ENCODE measurements at regions of chr12 and their contacts with region 1.

Region 1: GRCh38 chr12:85441740-85442139 is 161.7 kb downstream of the ALX1 start:
- DNase-seq: no peak
- H3K4me3 ChIP-seq: no peak overlapping the region
- H3K27ac ChIP-seq: no peak overlapping the region
- H3K4me1 ChIP-seq: no peaks in the 10 kb centered on the region
- H3K27me3 ChIP-seq: no peaks in the 10 kb centered on the region
- CTCF ChIP-seq: peak; percentile 43; the same call in 1 of the 2 replicates

Region 2: GRCh38 chr12:85036241-85036707 is 405.5 kb before region 1 on chr12 and contains the starts of genes LRRIQ1 and TSPAN19:
- CTCF ChIA-PET with region 1: interaction called, 14 read pairs
- POLR2A ChIA-PET with region 1: no interaction called
- intact Hi-C with region 1: no loop called
- DNase-seq: peak; percentile 68 to 69
- H3K4me3 ChIP-seq: peak within 1 kb of the TSS; percentile 60
- H3K27ac ChIP-seq: no peak within 1 kb of the TSS
- H3K4me1 ChIP-seq: no peaks in the 10 kb centered on the region; the same call in 1 of the 2 replicates
- H3K27me3 ChIP-seq: no peaks in the 10 kb centered on the region
- CTCF ChIP-seq: no peak
- total RNA-seq, gene LRRIQ1: 4.2 and 5.2 TPM in 2 replicates
- total RNA-seq, gene TSPAN19: not detected in 2 replicates

Region 3: DNA sequence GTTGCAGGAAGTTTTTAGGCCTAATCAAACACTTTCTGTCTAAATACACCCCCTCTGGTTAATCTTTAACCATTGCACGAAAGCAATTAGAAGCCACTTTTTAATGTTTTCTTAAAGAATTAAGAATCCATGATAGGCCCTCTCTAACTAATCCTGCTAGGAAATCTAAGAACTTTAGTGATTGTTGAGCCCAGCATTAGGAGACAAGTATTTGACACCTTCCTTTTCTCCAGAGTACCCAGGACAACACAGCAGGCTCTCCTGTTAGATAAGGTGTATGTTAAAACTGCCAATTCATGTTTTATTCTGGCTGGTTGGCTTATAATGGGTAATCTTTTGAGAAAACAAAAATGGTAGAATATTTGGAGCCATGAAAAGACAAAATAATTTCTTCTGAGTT is 66.8 kb before region 1 on chr12:
- CTCF ChIA-PET with region 1: no interaction called
- POLR2A ChIA-PET with region 1: interaction called, 10 read pairs
- intact Hi-C with region 1: no loop called
- DNase-seq: no peak
- H3K4me3 ChIP-seq: no peak overlapping the region
- H3K27ac ChIP-seq: no peak overlapping the region
- H3K4me1 ChIP-seq: no peaks in the 10 kb centered on the region
- H3K27me3 ChIP-seq: no peaks in the 10 kb centered on the region
- CTCF ChIP-seq: no peak

Measured in PC-9 (cell line).